Activated T-helper 1 cell treated with anti-CD3 and anti-CD28 coated beads, Interleukin-12 subunit alpha, Interleukin-12 subunit beta, Interleukin-2, Interleukin-4 antibody, amounts not matched to agents 30 ng/mL and 10 ng/mL and 1 ng/mL, durations not matched to agents 14 hours and 24 hours and 36 hours (primary cell): ENCODE measurements at regions of chr17 and their contacts with region 1.

Region 1: GRCh38 chr17:7484067-7484918 is at the start of gene POLR2A:
- DNase-seq: peak; percentile 96
- H3K4me3 Mint-ChIP-seq: peak within 1 kb of the TSS; percentile 96
- H3K27ac Mint-ChIP-seq: peak within 1 kb of the TSS; percentile 98
- H3K4me1 Mint-ChIP-seq: peaks cover 56% of the 10 kb centered on the region
- H3K27me3 Mint-ChIP-seq: no peaks in the 10 kb centered on the region
- total RNA-seq, gene POLR2A: 221 and 223 TPM in 2 replicates

Region 2: DNA sequence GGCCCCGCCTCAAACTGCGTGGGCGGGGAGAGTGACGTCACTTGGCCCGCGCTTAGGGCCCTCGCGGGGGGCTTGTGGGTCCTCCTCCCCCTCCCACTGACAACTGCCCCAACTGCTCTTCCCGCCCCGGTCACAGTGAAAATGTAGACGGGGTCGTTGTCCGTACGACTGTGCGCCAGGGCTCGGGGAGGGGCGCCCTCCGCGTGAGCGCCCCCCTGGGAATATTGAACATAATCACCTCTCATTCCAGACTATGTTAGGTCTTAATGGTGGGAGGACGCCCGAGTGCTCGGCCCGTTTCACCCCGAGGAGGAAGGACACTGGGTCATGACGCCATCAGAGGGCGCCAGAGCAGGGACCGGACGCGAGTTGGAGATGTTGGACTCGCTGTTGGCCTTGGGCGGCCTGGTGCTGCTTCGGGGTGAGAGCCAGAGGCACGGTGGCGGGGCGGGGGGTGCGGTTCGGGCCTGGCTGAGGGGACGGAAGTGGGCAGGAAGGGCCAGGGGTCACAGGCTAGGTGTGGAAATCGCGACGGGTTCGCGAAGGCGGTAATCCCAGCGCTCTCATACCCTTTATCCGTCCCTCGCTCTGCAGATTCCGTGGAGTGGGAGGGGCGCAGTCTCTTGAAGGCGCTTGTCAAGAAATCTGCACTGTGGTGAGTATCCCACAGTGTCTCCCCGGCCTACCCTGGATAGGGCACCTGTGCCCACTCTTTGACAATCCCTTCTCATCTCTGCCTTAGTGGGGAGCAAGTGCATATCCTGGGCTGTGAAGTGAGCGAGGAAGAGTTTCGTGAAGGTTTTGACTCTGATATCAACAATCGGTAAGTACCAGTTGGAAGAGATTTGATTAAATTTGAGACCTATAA is 231.9 kb before region 1 on chr17 and contains the start of gene ELP5:
- intact Hi-C with region 1: loop called (anchors 1 kb)
- DNase-seq: peak; percentile 86
- H3K4me3 Mint-ChIP-seq: peak within 1 kb of the TSS; percentile 98
- H3K27ac Mint-ChIP-seq: peak within 1 kb of the TSS; percentile 99
- H3K4me1 Mint-ChIP-seq: peaks cover 42% of the 10 kb centered on the region
- H3K27me3 Mint-ChIP-seq: peaks cover 5% of the 10 kb centered on the region
- total RNA-seq, gene ELP5: 73.6 and 75.5 TPM in 2 replicates

Region 3: GRCh38 chr17:7351665-7352501 is 132.4 kb before region 1 on chr17 and contains the start of gene KCTD11:
- intact Hi-C with region 1: loop called (anchors 5 kb)
- DNase-seq: peak; percentile 76
- H3K4me3 Mint-ChIP-seq: peak within 1 kb of the TSS; percentile 84
- H3K27ac Mint-ChIP-seq: peak within 1 kb of the TSS; percentile 87
- H3K4me1 Mint-ChIP-seq: peaks cover 41% of the 10 kb centered on the region
- H3K27me3 Mint-ChIP-seq: no peaks in the 10 kb centered on the region
- total RNA-seq, gene KCTD11: 5.3 TPM in 2 replicates

Region 4: DNA sequence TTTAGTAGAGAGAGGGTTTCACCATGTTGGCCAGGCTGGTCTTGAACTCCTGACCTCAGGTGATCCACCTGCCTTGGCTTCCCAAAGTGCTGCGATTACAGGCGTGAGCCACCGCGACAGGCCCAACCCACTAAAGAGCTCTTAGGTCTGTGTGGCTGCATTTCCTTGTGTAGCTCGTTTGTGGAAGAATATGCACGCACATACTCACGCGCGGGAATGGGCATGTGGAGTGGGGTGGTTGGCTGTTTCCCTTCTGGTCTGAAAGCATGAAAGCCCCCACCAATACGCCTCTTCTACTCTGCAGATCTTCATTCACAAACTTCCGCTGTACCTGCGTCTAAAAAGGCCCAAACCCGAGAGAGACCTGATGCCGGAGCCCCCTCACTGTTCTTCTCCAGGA is 29.3 kb before region 1 on chr17:
- intact Hi-C with region 1: loop called (anchors 1 kb)
- DNase-seq: no peak
- H3K4me3 Mint-ChIP-seq: peak overlapping the region; percentile 87
- H3K27ac Mint-ChIP-seq: peak overlapping the region; percentile 88
- H3K4me1 Mint-ChIP-seq: peaks cover 31% of the 10 kb centered on the region
- H3K27me3 Mint-ChIP-seq: no peaks in the 10 kb centered on the region

Region 5: GRCh38 chr17:7561028-7561575 is 76.8 kb after region 1 on chr17:
- intact Hi-C with region 1: loop called (anchors 1 kb)
- DNase-seq: peak; percentile 81
- H3K4me3 Mint-ChIP-seq: peak overlapping the region; percentile 97
- H3K27ac Mint-ChIP-seq: peak overlapping the region; percentile 92
- H3K4me1 Mint-ChIP-seq: peaks cover 56% of the 10 kb centered on the region
- H3K27me3 Mint-ChIP-seq: no peaks in the 10 kb centered on the region

Region 6: DNA sequence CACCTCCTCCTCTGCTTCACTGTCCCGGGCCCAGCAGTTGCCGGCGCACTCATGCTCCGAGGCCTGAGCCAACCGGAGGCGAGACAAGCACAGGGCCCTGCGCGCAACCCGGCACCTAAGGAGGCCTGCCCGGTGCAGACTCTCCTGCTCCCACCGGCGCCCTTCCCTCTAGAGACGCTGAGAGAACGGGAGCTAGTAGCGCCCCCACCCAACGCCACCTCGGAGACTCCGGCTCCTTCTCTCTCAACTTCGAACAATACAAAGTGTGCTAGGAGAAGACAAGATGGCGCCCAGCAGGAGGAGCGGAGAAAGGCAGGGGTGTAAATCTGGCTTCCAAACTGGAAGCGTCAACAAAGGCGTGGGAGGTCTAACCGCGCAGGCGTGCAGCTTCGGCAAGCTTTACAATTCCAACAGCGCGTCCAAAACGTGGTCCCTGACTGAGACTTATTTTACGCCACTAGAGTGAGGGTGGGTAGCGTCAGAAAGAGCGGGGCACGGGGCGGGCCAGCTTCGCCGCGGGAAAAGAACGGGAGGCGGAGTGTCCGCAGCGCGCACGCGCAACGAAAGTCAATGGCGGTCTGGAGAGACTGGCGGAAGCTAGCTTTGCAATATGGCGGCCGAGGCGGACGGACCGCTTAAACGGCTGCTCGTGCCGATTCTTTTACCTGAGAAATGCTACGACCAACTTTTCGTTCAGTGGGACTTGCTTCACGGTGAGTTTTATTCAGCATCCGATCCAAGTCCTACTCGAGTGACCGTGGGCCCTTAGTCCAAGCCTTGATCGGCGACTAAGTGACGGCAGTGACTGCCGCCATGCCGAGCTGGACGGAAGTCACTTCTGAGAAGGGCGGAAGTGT is 99.2 kb after region 1 on chr17 and contains the start of gene MPDU1:
- intact Hi-C with region 1: loop called (anchors 1 kb)
- DNase-seq: peak; percentile 95
- H3K4me3 Mint-ChIP-seq: peak within 1 kb of the TSS; percentile 98
- H3K27ac Mint-ChIP-seq: peak within 1 kb of the TSS; percentile 100
- H3K4me1 Mint-ChIP-seq: peaks cover 54% of the 10 kb centered on the region
- H3K27me3 Mint-ChIP-seq: no peaks in the 10 kb centered on the region
- total RNA-seq, gene MPDU1: 108 and 111 TPM in 2 replicates